CD8-positive, alpha-beta T cell (primary cell): ENCODE measurements at regions of chr11 and their contacts with region 1.

Region 1: DNA sequence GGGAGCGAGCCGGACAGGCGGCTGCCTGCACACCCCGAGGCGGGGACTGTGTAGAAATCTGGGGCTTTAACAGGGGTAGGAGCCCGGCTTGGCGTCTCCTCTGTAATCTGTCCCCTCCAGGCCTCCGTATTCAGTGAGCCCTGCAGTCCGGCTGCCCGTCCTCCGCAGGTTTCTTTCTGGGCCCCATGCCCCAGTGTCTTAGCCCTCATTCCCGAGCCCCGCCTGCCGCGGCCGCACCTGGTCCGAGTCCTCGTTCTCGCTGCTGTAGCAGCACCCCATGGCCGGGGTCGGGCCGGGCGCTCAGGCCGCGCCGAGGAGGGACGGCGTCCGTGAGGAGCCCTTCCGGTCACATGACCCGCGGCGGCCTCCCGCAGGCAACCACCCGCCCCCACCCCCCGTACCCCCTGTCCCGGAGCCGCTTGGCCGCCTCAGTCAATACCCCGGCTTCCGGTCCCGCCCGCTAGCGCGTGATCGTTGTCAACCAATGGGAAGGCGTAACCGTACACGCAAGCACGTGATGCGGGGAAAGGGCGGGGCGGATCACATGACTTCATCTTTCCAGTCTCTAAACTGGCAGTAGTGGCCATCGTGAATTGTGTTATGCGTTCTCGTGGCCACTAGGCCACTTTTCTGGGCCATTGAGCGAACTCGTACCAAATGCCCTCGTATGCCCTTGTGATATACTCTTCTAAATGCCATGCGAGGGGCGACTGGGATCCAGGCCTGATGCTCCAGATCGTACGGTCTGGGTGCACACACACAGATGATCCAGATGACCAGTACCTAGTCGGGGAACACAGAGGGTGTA is at the start of gene LAMTOR1:
- DNase-seq: peak; percentile 93 to 99 (median 98)
- ATAC-seq: peak; percentile 96
- H3K4me3 ChIP-seq: peak within 1 kb of the TSS; percentile 67 to 93
- H3K4me3 Mint-ChIP-seq: peak within 1 kb of the TSS; percentile 74
- H3K27ac ChIP-seq: peak within 1 kb of the TSS; percentile 90 to 97
- H3K27ac Mint-ChIP-seq: peak within 1 kb of the TSS; percentile 88
- H3K4me1 ChIP-seq: peaks cover 22% of the 10 kb centered on the region
- H3K4me1 Mint-ChIP-seq: peaks cover 45% of the 10 kb centered on the region
- H3K27me3 ChIP-seq: no peaks in the 10 kb centered on the region
- H3K27me3 Mint-ChIP-seq: no peaks in the 10 kb centered on the region
- CTCF ChIP-seq: no peak
- total RNA-seq, gene LAMTOR1: 27.1 to 30.4 TPM

Region 2: DNA sequence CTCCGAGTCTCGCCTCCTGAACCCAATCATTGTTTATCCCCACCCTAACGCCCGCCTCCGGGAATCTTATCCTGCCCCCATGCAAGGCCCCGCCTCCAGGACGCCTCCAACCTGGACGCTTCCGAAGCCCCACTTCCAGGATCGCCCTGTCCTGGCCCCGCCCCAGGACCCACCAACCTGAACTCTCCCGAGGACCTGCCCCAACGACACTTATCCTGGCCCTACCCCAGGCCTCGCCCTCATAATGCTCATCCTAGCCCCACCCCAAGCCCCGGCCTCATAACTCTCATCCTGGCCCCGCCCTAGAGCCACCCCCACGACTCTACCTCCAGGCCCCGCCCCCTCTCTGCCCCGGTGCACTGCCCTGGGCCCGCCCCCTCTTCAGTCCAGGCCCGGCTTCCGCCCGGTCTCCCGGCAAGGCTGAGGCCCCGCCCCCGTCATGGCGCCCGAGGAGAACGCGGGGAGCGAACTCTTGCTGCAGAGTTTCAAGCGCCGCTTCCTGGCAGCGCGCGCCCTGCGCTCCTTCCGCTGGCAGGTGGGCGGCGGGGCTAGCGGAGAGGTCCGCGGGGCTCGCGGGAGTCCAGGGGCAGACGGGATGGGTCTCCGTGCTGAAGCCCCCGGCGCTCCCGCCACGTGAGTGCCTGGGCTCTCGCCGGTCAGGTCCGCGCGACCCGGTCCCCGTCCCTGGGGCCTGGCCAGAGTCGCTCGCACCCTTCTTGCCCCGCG is 315.9 kb before region 1 on chr11:
- CTCF ChIA-PET with region 1: no interaction called
- POLR2A ChIA-PET with region 1: no interaction called
- intact Hi-C with region 1: loop called in 1 of 2 experiments (anchors 5 kb)
- DNase-seq: peak; percentile 77 to 97 (median 90)
- ATAC-seq: peak; percentile 96
- H3K4me3 ChIP-seq: peak overlapping the region; percentile 84 to 96
- H3K4me3 Mint-ChIP-seq: peak overlapping the region; percentile 94
- H3K27ac ChIP-seq: peak overlapping the region; percentile 80 to 97
- H3K27ac Mint-ChIP-seq: peak overlapping the region; percentile 95
- H3K4me1 ChIP-seq: no peaks in the 10 kb centered on the region
- H3K4me1 Mint-ChIP-seq: peaks cover 6% of the 10 kb centered on the region
- H3K27me3 ChIP-seq: no peaks in the 10 kb centered on the region
- H3K27me3 Mint-ChIP-seq: no peaks in the 10 kb centered on the region
- CTCF ChIP-seq: no peak

Region 3: DNA sequence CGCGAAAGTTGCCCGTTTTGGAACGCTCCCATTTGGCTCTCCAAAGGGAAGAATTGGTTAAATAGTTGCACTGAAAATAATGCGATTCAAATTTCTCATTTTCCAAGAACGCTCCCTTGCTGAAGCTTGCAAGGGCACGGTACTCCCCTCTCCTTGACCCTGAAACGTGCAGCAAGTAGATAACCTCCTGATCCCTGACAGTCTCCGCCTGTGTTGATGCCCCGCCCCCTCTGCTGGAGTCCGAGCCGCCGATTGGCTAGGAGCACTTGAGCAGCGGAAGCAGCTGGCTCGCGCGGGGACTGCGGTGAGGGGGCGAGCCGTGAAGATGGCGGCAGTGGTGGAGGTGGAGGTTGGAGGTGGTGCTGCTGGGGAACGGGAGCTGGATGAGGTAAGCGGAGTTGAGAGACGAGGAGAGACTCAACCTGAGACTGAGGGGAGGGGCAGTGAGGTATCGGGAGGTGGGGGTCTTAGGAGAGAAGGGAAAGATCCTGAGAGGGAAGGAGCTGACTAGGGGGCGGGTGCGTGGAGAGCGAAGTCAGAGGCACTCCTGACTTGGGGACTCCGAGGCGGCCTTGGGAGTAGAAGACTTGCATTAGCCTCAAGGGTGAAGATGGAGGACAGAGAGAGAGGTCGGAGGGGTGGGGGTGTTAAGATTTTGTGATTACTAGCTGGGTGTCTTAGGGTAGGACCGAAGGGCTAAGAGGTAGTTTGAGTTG is 174.3 kb before region 1 on chr11 and contains the start of gene RNF121:
- CTCF ChIA-PET with region 1: no interaction called
- POLR2A ChIA-PET with region 1: interaction called, 3 read pairs
- intact Hi-C with region 1: loop called (anchors 1 to 2 kb)
- DNase-seq: peak; percentile 94 to 99 (median 97)
- ATAC-seq: peak; percentile 86
- H3K4me3 ChIP-seq: peak within 1 kb of the TSS; percentile 67 to 98
- H3K4me3 Mint-ChIP-seq: peak within 1 kb of the TSS; percentile 100
- H3K27ac ChIP-seq: peak within 1 kb of the TSS; percentile 90 to 96
- H3K27ac Mint-ChIP-seq: peak within 1 kb of the TSS; percentile 99
- H3K4me1 ChIP-seq: peaks cover 22% of the 10 kb centered on the region
- H3K4me1 Mint-ChIP-seq: peaks cover 57% of the 10 kb centered on the region
- H3K27me3 ChIP-seq: no peaks in the 10 kb centered on the region
- H3K27me3 Mint-ChIP-seq: no peaks in the 10 kb centered on the region
- CTCF ChIP-seq: no peak
- total RNA-seq, gene RNF121: 8.5 to 9.0 TPM

Region 4: DNA sequence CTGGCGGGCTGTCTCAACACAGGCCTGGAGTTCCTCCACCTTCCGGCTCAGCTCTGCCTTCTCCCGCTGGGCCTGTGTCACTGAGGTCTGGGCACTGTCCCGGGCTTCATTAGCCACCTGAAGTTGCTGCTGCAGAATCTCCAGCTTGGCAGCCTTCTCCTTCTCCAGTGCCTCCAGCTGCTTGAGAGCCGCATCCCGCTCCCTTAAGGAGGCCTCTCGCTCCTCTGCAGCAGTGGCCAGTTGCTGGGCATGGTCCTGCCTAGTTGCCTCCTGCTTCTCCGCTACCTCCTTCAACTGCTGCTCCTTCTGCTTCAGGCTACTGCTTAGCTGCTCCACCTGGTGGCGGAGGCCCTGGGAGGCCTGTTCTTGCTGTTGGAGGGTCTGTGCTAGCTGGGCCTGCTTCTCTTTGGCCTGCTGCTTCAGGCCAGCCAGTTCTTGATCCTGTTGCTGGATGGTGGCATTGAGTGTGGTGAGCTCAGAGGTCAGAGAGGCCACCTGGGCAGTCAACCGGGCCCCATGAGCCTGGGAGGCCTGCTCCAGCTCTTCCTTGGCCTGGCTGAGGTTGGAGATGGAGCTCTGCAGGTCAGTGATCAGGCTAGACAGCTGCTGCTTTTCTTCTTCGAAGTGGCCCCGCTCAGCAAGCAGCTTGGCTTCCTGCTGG is 87.5 kb before region 1 on chr11:
- CTCF ChIA-PET with region 1: interaction called, 436 read pairs
- POLR2A ChIA-PET with region 1: no interaction called
- intact Hi-C with region 1: no loop called
- DNase-seq: peak in 1 of 9 experiments; percentile 26
- ATAC-seq: no peak
- H3K4me3 ChIP-seq: no peak overlapping the region
- H3K4me3 Mint-ChIP-seq: no peak overlapping the region
- H3K27ac ChIP-seq: no peak overlapping the region
- H3K27ac Mint-ChIP-seq: no peak overlapping the region
- H3K4me1 ChIP-seq: no peaks in the 10 kb centered on the region
- H3K4me1 Mint-ChIP-seq: peaks cover 1% of the 10 kb centered on the region
- H3K27me3 ChIP-seq: no peaks in the 10 kb centered on the region
- H3K27me3 Mint-ChIP-seq: no peaks in the 10 kb centered on the region
- CTCF ChIP-seq: no peak

Region 5: DNA sequence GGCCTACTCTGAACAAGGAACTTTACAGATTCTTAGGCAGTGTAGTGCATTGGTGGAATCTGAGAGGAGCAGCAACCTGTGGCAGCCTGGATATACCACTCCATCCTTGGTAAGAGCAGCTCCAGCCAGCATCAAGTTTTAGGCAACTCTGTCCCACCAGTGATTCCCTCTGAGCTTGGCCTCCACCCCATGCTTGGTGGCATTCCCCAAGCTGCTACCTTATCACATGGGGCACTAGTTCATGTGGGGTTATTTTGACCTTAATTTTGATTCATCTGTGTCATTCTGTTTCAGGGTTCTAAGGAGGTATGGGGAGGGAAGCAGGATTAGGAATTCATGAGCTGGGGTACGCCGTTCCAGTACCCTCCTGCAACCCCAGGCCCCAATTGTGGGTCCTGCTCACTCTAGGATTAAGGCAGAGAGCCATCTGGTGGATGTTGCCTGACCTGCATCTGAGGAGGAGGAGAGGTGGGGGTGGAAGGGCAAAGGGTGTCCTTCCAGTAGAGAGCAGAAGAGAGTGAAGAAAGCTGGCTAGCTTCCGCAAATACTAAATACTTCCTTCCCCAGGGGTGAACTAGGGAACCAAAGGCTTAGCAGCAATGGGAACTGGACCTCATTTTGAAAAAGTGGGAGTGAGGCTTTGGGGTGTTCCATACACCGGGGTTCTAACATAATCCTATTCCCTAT is 12.0 kb before region 1 on chr11:
- CTCF ChIA-PET with region 1: interaction called, 37 read pairs
- POLR2A ChIA-PET with region 1: interaction called, 6 read pairs
- intact Hi-C with region 1: no loop called
- DNase-seq: peak; percentile 50 to 80 (median 73)
- ATAC-seq: peak; percentile 99
- H3K4me3 ChIP-seq: no peak overlapping the region
- H3K4me3 Mint-ChIP-seq: no peak overlapping the region
- H3K27ac ChIP-seq: no peak overlapping the region
- H3K27ac Mint-ChIP-seq: peak overlapping the region; percentile 70
- H3K4me1 ChIP-seq: no peaks in the 10 kb centered on the region
- H3K4me1 Mint-ChIP-seq: peaks cover 12% of the 10 kb centered on the region
- H3K27me3 ChIP-seq: no peaks in the 10 kb centered on the region
- H3K27me3 Mint-ChIP-seq: no peaks in the 10 kb centered on the region
- CTCF ChIP-seq: peak; percentile 74

Region 6: GRCh38 chr11:72123117-72123653 is 20.0 kb after region 1 on chr11:
- CTCF ChIA-PET with region 1: no interaction called
- POLR2A ChIA-PET with region 1: no interaction called
- intact Hi-C with region 1: no loop called
- DNase-seq: no peak
- ATAC-seq: no peak
- H3K4me3 ChIP-seq: no peak overlapping the region
- H3K4me3 Mint-ChIP-seq: no peak overlapping the region
- H3K27ac ChIP-seq: no peak overlapping the region
- H3K27ac Mint-ChIP-seq: no peak overlapping the region
- H3K4me1 ChIP-seq: no peaks in the 10 kb centered on the region
- H3K4me1 Mint-ChIP-seq: no peaks in the 10 kb centered on the region
- H3K27me3 ChIP-seq: no peaks in the 10 kb centered on the region
- H3K27me3 Mint-ChIP-seq: peaks cover 15% of the 10 kb centered on the region
- CTCF ChIP-seq: no peak